H1 (cell line): ENCODE measurements at regions of chr2 and their contacts with region 1.

Region 1: DNA sequence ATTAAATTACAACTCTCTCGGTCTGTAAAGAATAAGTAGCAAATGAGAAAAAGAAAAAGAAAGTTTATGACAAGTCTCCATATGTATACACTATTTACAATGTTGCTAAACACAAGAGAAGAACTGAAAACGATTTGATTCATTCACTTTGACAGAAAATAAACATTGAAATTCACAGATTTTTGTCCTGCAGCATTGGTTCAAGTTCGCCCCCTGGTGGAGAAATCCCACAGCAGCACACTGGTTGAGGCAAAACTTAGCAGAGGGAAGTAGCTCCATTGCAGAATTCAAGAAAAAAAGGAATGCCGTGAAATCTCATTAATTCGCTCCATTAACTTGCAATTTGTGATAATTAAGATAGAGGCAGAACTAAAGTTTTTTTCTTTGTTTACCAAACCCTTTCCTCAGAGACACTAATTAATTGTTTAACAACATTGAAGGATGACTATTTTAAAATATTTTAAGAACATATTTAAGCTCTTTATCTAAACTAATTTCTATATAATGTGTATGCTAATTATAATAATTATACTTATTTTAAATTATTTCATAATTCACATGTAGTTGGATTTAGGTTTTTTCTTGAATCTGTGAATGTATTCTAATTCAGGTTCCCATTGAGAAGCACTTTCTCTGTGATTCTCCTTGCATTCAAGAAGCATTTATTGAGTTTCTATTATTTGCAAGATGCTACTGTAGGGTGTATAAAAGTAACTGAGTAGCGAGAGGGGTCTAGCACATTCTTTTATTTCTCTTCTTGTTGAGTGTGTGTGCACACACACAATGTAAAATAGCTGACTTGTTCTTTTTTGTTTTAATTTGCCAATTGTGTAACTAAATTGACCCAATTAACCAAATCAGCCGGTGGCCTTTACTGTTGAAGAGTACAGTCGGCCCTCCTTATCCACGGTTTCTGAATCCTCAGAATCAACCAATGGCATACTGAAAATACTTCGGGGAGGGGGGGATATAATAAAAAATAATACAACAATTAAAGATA is 74.1 kb downstream of the COL4A3 start:
- DNase-seq: peak; percentile 39 to 82
- H3K4me3 ChIP-seq: no peak overlapping the region
- H3K27ac ChIP-seq: no peak overlapping the region
- H3K4me1 ChIP-seq: 0 out of 7 replicates have a peak, but pooled peaks cover 0 to 2% (median 0%) of the 10 kb centered on the region in 4 experiments
- H3K27me3 ChIP-seq: no peaks in the 10 kb centered on the region
- CTCF ChIP-seq: peak; percentile 73 to 89 (median 80)
- EP300 ChIP-seq: no peak
- POLR2A ChIP-seq: no peak
- RAD21 ChIP-seq: peak; percentile 89 to 90

Region 2: DNA sequence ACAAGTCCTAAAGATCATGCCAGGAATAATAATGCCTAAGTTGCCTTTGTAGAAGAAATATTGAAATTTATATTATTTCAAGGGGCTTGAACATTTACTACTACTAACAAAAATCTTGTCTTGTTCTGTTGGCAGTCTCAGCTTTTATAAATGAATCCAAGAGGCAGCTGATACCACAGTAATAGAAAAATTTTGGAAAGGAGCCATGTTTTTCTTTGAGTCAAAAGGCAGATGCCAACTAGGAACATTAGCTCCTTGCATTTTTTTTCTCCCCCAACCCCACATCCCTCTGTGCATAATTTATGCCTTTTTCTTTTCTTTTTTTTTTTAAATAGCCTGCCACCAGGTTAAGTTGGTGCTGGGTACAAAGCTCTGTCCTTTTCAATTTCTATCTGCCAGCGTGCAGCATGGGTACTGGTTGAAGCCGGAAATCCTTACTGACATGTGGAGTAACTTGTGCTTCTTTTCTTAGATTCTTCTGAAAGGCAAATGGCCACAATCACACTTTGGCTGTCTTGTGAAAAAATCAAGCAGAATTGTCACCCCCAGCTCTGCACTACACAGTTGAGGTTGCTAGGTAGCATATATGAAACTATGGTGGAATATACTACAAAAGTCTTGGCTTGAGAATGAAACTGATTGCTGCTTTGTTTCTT is 303.9 kb before region 1 on chr2:
- CTCF ChIA-PET with region 1: no interaction called
- POLR2A ChIA-PET with region 1: no interaction called
- DNase-seq: no peak
- H3K4me3 ChIP-seq: no peak overlapping the region
- H3K27ac ChIP-seq: no peak overlapping the region
- H3K4me1 ChIP-seq: 0 out of 7 replicates have a peak, but pooled peaks cover 0 to 2% (median 0%) of the 10 kb centered on the region in 4 experiments
- H3K27me3 ChIP-seq: no peaks in the 10 kb centered on the region
- CTCF ChIP-seq: no peak
- EP300 ChIP-seq: no peak
- POLR2A ChIP-seq: no peak
- RAD21 ChIP-seq: no peak

Region 3: GRCh38 chr2:227125506-227125905 is 113.0 kb before region 1 on chr2:
- CTCF ChIA-PET with region 1: interaction called, 112 read pairs
- POLR2A ChIA-PET with region 1: no interaction called
- DNase-seq: peak in 1 of 2 experiments; percentile 60
- H3K4me3 ChIP-seq: no peak overlapping the region
- H3K27ac ChIP-seq: no peak overlapping the region
- H3K4me1 ChIP-seq: no peaks in the 10 kb centered on the region
- H3K27me3 ChIP-seq: no peaks in the 10 kb centered on the region
- CTCF ChIP-seq: peak; percentile 45 to 67 (median 56)
- EP300 ChIP-seq: no peak
- POLR2A ChIP-seq: no peak
- RAD21 ChIP-seq: peak; percentile 50 to 51

Region 4: GRCh38 chr2:227132986-227133385 is 105.6 kb before region 1 on chr2:
- CTCF ChIA-PET with region 1: interaction called, 112 read pairs
- POLR2A ChIA-PET with region 1: no interaction called
- DNase-seq: no peak
- H3K4me3 ChIP-seq: no peak overlapping the region
- H3K27ac ChIP-seq: no peak overlapping the region
- H3K4me1 ChIP-seq: no peaks in the 10 kb centered on the region
- H3K27me3 ChIP-seq: no peaks in the 10 kb centered on the region
- CTCF ChIP-seq: no peak
- EP300 ChIP-seq: no peak
- POLR2A ChIP-seq: no peak
- RAD21 ChIP-seq: no peak

Region 5: GRCh38 chr2:227154986-227155774 is 83.4 kb before region 1 on chr2:
- CTCF ChIA-PET with region 1: interaction called, 27 read pairs
- POLR2A ChIA-PET with region 1: no interaction called
- DNase-seq: no peak
- H3K4me3 ChIP-seq: no peak overlapping the region
- H3K27ac ChIP-seq: no peak overlapping the region
- H3K4me1 ChIP-seq: no peaks in the 10 kb centered on the region
- H3K27me3 ChIP-seq: no peaks in the 10 kb centered on the region
- CTCF ChIP-seq: peak in 2 of 3 experiments; percentile 6 to 25; a peak in 2 of 4 replicates
- EP300 ChIP-seq: no peak
- POLR2A ChIP-seq: no peak
- RAD21 ChIP-seq: peak in 1 of 2 experiments; percentile 22; a peak in 1 of 4 replicates

Region 6: GRCh38 chr2:227228061-227228667 is 10.4 kb before region 1 on chr2:
- CTCF ChIA-PET with region 1: interaction called, 21 read pairs
- POLR2A ChIA-PET with region 1: no interaction called
- DNase-seq: no peak
- H3K4me3 ChIP-seq: no peak overlapping the region
- H3K27ac ChIP-seq: no peak overlapping the region
- H3K4me1 ChIP-seq: no peaks in the 10 kb centered on the region
- H3K27me3 ChIP-seq: no peaks in the 10 kb centered on the region
- CTCF ChIP-seq: no peak
- EP300 ChIP-seq: no peak
- POLR2A ChIP-seq: no peak
- RAD21 ChIP-seq: no peak

Region 7: DNA sequence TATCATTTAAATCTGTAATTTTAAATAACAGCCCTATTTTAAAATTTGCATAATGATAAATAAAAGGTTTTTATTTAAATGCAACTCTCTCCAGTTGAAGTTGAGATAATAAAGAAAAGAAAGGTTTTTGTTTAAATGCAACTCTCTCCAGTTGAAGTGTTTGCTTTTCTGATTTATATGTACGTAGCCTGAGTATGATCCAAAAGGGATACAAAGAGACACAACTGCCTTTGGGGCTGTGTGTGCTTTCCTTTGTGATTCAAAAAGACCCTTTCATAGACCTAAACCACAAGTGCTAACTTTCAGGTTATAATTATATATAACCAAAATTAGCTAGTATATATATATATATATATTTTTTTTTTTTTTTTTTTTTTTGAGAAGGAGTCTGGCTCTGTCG is 10.3 kb after region 1 on chr2:
- CTCF ChIA-PET with region 1: interaction called, 10 read pairs
- POLR2A ChIA-PET with region 1: no interaction called
- DNase-seq: no peak
- H3K4me3 ChIP-seq: no peak overlapping the region
- H3K27ac ChIP-seq: no peak overlapping the region
- H3K4me1 ChIP-seq: no peaks in the 10 kb centered on the region
- H3K27me3 ChIP-seq: no peaks in the 10 kb centered on the region
- CTCF ChIP-seq: no peak
- EP300 ChIP-seq: no peak
- POLR2A ChIP-seq: no peak
- RAD21 ChIP-seq: no peak

Region 8: DNA sequence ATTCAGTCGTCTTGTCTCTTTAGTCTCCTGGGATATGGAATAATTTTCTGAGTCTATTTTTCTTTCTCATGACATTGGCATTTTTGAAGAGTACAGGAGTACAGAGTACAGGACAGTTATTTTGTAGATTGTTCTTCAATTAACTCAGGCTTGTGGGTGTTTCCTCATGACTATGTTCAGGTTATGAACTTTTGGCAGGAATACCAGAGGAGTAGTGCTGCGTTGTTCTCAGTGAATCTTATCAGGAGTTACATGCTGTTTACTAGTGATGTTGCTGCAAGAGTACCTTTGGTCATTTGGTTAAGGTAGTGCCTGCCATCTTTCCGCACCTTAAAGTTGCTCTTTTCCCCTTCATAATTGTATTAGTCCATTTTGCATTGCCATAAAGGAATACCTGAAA is 192.1 kb after region 1 on chr2:
- CTCF ChIA-PET with region 1: no interaction called
- POLR2A ChIA-PET with region 1: no interaction called
- DNase-seq: no peak
- H3K4me3 ChIP-seq: no peak overlapping the region
- H3K27ac ChIP-seq: no peak overlapping the region
- H3K4me1 ChIP-seq: no peaks in the 10 kb centered on the region
- H3K27me3 ChIP-seq: no peaks in the 10 kb centered on the region
- CTCF ChIP-seq: no peak
- EP300 ChIP-seq: no peak
- POLR2A ChIP-seq: no peak
- RAD21 ChIP-seq: no peak